Activated T-helper 2 cell treated with anti-CD3 and anti-CD28 coated beads, Interferon-gamma antibody, Interleukin-2, Interleukin-4, amounts not matched to agents 10 μg/mL and 5 μg/mL and 100 μg/mL, durations not matched to agents 14 hours and 24 hours and 36 hours (primary cell): ENCODE measurements at regions of chr6 and their contacts with region 1.

Region 1: GRCh38 chr6:15299430-15300131 is 53.7 kb downstream of the JARID2 start:
- DNase-seq: peak; percentile 46
- H3K4me3 Mint-ChIP-seq: peak overlapping the region; percentile 53
- H3K27ac Mint-ChIP-seq: peak overlapping the region; percentile 68
- H3K4me1 Mint-ChIP-seq: peaks cover 74% of the 10 kb centered on the region
- H3K27me3 Mint-ChIP-seq: no peaks in the 10 kb centered on the region

Region 2: GRCh38 chr6:14857501-14857900 is 442.1 kb before region 1 on chr6:
- intact Hi-C with region 1: loop called (anchors 1 kb)
- DNase-seq: peak; percentile 18
- H3K4me3 Mint-ChIP-seq: peak overlapping the region; percentile 19
- H3K27ac Mint-ChIP-seq: peak overlapping the region; percentile 92
- H3K4me1 Mint-ChIP-seq: peaks cover 46% of the 10 kb centered on the region
- H3K27me3 Mint-ChIP-seq: no peaks in the 10 kb centered on the region

Region 3: DNA sequence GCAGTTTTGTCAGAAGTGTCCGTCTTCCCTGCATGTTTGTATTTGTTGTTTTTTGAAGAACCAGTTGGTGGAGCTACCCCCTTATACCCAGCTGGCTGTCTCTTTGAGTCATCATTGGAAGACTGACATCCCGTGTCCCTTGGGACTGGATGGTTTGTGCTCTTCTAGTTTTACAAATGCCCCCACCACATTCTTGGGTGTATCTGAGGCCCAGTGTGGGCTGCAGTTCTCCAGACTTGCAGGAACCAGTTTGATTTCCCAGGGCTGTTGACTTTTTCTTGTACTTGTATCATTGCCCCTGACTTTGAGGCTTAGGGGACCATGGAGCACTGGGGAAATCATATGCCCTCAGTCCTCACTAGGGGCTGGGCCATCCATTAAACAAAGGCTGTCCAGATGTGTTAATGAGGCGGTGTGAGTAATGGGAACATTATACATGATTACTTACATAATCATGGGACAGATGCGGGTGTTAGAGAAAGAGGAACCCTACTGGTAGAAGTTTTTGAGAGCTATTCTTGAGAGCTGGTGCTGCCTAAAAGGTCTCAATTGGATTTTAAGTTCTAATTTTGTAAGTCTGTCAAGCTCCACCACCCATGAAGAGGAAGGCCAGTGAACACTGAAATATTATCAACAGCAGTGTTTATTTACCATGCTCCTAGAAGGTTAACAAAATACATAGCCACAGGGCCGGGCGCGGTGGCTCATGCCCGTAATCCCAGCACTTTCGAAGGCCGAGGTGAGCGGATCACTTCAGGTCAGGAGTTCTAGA is 45.3 kb before region 1 on chr6:
- intact Hi-C with region 1: loop called (anchors 1 kb)
- DNase-seq: no peak
- H3K4me3 Mint-ChIP-seq: peak overlapping the region; percentile 65
- H3K27ac Mint-ChIP-seq: peak overlapping the region; percentile 83
- H3K4me1 Mint-ChIP-seq: peaks cover 88% of the 10 kb centered on the region
- H3K27me3 Mint-ChIP-seq: no peaks in the 10 kb centered on the region

Region 4: DNA sequence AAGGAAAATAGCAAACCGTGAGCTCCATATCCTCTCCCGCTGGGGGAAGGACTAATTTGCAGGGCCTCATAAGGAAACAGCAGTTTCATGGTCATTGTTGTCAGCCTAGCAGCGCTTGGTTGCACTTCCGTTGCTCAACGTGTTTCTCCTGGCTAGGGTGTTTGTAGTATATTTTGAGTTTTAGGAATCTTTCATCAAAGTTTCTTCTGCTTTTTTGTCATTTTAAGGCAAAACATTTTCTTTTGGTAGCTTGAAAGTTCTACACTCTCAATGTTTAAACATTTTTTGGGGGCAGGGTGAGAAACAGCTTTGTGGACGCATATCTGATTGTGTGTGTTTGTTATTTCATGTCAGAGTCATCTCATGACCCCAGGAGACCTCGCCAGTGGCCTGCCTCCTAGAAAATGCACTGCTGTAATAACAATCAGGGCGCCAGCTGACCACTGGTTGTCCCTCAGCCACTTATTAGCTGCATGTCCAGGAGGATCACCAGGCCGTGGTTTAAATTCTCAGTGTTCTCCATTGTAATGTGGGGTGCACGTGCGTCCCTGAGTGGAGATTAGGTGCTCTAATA is 33.1 kb before region 1 on chr6:
- intact Hi-C with region 1: no loop called
- DNase-seq: no peak
- H3K4me3 Mint-ChIP-seq: no peak overlapping the region
- H3K27ac Mint-ChIP-seq: peak overlapping the region; percentile 61
- H3K4me1 Mint-ChIP-seq: peaks cover 81% of the 10 kb centered on the region
- H3K27me3 Mint-ChIP-seq: no peaks in the 10 kb centered on the region

Region 5: GRCh38 chr6:15317934-15318902 is 18.6 kb after region 1 on chr6:
- intact Hi-C with region 1: loop called (anchors 2 kb)
- DNase-seq: no peak
- H3K4me3 Mint-ChIP-seq: no peak overlapping the region
- H3K27ac Mint-ChIP-seq: peak overlapping the region; percentile 69
- H3K4me1 Mint-ChIP-seq: peaks cover 80% of the 10 kb centered on the region
- H3K27me3 Mint-ChIP-seq: no peaks in the 10 kb centered on the region

Region 6: DNA sequence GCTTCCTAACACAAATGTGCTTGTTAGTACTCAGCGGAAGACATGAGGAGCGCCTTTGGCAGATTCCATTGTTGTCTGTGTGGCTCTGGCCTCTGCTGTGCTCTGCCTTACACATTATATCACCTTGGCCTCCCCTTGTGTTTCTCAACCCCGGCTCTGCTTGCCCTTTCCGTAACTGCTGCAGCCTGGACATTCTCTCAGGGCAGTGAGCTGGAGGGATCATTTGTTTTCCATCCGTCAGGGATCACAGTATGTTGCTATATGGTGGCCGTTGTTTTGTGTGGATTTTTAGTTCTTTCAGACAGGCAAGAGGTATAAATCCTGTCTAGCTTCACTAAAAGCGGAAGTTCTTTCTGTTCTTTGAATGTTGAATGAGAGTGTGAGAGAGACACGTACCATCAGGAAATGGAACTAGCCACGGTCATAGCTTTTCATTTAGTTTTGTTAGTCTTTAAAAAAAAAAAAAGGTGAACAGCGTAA is 121.4 kb after region 1 on chr6:
- intact Hi-C with region 1: loop called (anchors 5 kb)
- DNase-seq: no peak
- H3K4me3 Mint-ChIP-seq: peak overlapping the region; percentile 53
- H3K27ac Mint-ChIP-seq: peak overlapping the region; percentile 89
- H3K4me1 Mint-ChIP-seq: peaks cover 68% of the 10 kb centered on the region
- H3K27me3 Mint-ChIP-seq: no peaks in the 10 kb centered on the region